BJ (cell line): ENCODE measurements at regions of chr15 and their contacts with region 1.

Region 1: DNA sequence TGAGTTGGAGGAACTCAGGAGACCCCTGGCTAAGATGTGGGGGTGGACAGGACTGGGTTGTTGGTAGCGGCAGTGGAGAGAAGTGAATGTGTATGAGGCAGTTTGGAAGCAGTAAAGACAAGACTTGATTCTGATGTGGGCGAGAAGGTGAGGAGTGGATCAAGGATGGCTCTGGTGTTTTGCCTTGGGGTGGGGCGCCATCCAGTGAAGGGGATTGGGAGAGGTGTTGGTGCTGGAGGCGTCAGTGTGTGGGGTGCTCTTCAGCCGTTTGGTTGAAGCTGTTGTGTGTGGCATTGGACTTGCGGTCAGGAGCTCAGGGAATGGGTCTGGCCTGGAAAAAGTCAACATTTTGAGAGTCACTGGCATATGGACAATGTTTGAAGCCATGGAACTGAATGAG is 13.3 kb downstream of the FAN1 start:
- DNase-seq: no peak
- H3K4me3 ChIP-seq: no peak overlapping the region
- H3K27me3 ChIP-seq: no peaks in the 10 kb centered on the region
- CTCF ChIP-seq: no peak

Region 2: GRCh38 chr15:30903497-30904201 is 13.4 kb before region 1 on chr15 and contains the start of gene FAN1:
- CTCF ChIA-PET with region 1: interaction called, 10 read pairs
- POLR2A ChIA-PET with region 1: no interaction called
- DNase-seq: peak; percentile 19
- H3K4me3 ChIP-seq: peak within 1 kb of the TSS; percentile 89
- H3K27me3 ChIP-seq: no peaks in the 10 kb centered on the region
- CTCF ChIP-seq: no peak
- polyA plus RNA-seq, gene FAN1: 5.8 and 6.8 TPM in 2 replicates

Region 3: DNA sequence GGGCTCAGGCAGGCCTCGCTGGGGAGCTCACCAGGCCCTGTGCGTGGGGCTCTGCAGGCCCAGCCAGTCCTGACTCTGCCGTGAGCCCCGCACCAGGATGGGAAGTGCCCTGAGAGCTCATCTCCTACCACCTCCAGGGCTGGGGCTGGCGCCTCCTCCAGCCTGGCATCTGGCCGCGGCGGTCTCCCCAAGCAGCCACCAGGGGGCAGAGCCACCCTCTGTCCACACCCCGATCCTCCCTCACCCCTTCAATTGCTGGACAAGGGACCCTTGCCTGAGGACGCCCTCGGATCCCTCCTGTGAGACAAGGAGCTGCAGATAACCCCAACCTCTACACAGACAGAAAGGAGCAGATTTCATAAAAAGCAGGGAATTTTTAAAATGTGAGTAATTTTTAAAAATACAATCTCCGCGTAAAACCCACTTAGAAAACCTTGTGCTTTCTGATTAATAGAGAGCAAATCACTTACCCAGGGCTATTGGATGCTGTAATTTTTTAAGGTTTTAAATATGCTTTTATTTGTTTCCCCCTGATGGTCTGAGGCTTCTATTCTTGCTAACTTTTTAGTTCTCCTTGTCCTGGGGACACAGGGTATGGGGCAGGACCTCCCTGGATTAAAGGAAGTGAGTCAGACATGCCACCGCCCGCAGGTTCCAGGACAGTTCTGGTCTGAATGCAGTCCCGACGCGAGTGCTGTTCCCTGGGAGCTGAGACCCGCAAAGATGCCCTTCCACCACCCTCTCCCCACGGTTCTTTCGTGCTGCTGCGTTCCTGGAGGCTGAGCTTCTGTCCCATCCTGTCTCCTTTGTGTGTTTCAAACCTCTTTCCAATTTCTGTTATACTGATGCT is 1061.0 kb after region 1 on chr15:
- CTCF ChIA-PET with region 1: no interaction called
- POLR2A ChIA-PET with region 1: no interaction called
- DNase-seq: no peak
- H3K4me3 ChIP-seq: no peak overlapping the region
- H3K27me3 ChIP-seq: no peaks in the 10 kb centered on the region
- CTCF ChIP-seq: peak; percentile 82